H1 (cell line): ENCODE measurements at regions of chr3 and their contacts with region 1.

Region 1: DNA sequence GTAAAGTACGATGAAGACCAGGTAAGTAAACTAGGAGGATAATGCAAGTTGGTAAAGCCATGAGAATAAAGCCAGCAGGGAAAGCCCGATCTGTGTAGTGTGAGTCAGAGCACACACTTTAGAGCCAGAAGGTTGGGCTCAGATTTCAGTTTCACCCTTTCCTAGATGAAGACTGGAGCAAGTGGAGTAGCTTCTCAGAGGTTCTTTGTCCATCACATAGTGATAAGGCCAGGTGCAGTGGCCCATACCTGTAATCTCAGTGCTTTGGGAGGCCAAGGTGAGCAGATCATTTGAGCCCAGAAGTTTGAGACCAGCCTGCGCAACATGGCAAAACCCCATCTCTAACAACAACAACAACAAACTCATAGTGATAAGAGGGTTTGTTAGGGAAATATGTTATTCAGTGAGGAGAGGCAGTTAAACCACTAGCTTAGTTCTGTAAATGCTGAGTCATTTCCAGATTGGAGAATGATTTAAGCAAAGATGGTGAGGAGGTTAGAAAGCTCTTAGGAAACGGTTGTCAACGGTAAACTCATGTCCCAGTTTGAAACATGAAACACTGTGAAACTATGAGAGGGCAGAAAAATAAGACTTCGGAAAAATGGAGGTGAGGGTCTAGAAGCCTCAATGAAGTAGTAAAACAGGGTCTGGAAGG is 39.0 kb downstream of the IL12A start:
- DNase-seq: no peak
- H3K4me3 ChIP-seq: no peak overlapping the region
- H3K27ac ChIP-seq: no peak overlapping the region
- H3K4me1 ChIP-seq: no peaks in the 10 kb centered on the region
- H3K27me3 ChIP-seq: no peaks in the 10 kb centered on the region
- CTCF ChIP-seq: no peak
- EP300 ChIP-seq: no peak
- POLR2A ChIP-seq: no peak
- RAD21 ChIP-seq: no peak

Region 2: DNA sequence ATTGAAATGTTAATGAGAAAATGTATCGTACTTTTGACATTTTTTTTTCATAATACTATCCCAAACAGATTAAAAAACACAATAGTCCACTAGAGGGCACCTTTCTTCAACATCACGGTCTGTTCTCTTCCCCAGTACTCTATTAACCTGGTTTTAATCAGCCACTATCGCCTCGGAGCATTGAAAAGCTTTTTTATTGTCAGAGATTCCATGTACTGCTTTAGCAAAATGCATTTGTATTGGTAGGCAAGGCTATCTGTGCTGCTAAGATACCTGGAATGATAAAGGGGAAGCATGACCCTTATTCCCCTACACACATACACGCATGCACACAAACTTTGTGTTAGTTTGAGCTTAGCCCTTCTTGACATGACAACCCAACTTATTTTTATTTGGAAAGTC is 199.1 kb before region 1 on chr3:
- CTCF ChIA-PET with region 1: no interaction called
- POLR2A ChIA-PET with region 1: no interaction called
- DNase-seq: no peak
- H3K4me3 ChIP-seq: no peak overlapping the region
- H3K27ac ChIP-seq: no peak overlapping the region
- H3K4me1 ChIP-seq: no peaks in the 10 kb centered on the region
- H3K27me3 ChIP-seq: no peaks in the 10 kb centered on the region
- CTCF ChIP-seq: peak in 2 of 3 experiments; percentile 33 to 38; a peak in 2 of 4 replicates
- EP300 ChIP-seq: no peak
- POLR2A ChIP-seq: no peak
- RAD21 ChIP-seq: peak; percentile 56 to 62

Region 3: GRCh38 chr3:160012108-160012507 is 15.6 kb before region 1 on chr3:
- CTCF ChIA-PET with region 1: interaction called, 20 read pairs
- POLR2A ChIA-PET with region 1: no interaction called
- DNase-seq: no peak
- H3K4me3 ChIP-seq: no peak overlapping the region
- H3K27ac ChIP-seq: no peak overlapping the region
- H3K4me1 ChIP-seq: no peaks in the 10 kb centered on the region
- H3K27me3 ChIP-seq: no peaks in the 10 kb centered on the region
- CTCF ChIP-seq: no peak
- EP300 ChIP-seq: no peak
- POLR2A ChIP-seq: no peak
- RAD21 ChIP-seq: no peak

Region 4: GRCh38 chr3:160044121-160044520 is 16.5 kb after region 1 on chr3:
- CTCF ChIA-PET with region 1: interaction called, 25 read pairs
- POLR2A ChIA-PET with region 1: no interaction called
- DNase-seq: no peak
- H3K4me3 ChIP-seq: no peak overlapping the region
- H3K27ac ChIP-seq: no peak overlapping the region
- H3K4me1 ChIP-seq: peaks cover 0 to 4% (median 3%) of the 10 kb centered on the region in 4 experiments; a peak in 2 of 7 replicates
- H3K27me3 ChIP-seq: peaks cover 0 to 4% (median 2%) of the 10 kb centered on the region in 4 experiments; a peak in 5 of 7 replicates
- CTCF ChIP-seq: no peak
- EP300 ChIP-seq: no peak
- POLR2A ChIP-seq: no peak
- RAD21 ChIP-seq: no peak

Region 5: DNA sequence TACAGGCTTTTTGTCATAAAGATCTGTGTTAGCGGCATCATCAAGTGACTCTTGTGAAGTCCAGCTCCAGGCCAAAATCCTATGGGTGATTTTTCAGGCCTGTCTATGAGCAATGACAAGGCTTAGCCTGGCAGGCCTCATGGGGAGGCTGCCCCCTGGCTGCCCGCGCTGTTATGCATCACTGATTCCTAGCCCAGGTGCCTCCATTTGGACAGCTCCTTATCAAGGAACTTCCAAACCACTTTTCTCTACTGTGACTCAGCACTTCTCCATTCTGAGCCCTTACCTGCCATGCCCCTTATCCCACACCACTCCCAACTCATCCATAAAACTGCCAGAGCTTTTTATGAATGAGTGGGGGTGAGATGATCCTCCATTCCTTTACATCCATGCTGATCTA is 106.1 kb after region 1 on chr3:
- CTCF ChIA-PET with region 1: interaction called, 17 read pairs
- POLR2A ChIA-PET with region 1: interaction called, 3 read pairs
- DNase-seq: peak; percentile 19 to 47
- H3K4me3 ChIP-seq: no peak overlapping the region
- H3K27ac ChIP-seq: no peak overlapping the region
- H3K4me1 ChIP-seq: no peaks in the 10 kb centered on the region
- H3K27me3 ChIP-seq: no peaks in the 10 kb centered on the region
- CTCF ChIP-seq: peak; percentile 60 to 68 (median 67)
- EP300 ChIP-seq: no peak
- POLR2A ChIP-seq: no peak
- RAD21 ChIP-seq: peak; percentile 48 to 63

Region 6: DNA sequence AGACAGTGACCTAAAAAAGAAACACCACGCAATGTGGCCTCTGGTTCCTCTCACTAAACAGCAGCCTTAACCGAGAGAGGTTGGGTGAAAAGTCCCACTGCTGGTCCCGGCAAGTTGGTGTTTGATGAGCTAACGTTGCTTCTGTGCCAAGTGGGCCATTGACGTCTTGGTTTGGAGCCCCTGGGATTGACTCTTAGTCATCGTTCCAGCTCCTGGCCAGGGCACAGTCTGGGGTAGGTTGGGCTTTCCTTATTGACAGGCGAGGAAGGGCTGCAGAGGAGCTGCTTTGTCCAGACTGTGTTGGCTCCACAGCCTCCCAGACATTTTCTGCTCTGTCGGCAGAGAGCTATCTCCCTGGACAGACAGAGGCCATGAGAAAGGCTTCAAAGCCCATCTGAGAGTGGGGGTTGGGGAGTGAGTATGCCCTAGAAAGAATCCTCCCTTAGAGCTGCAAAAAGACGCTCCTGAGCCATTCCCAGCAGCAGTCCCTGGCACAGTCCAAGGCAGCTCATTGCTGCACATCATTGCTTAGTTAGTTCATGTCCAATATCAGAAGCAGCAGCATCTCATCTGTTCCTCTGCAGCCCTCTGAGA is 168.9 kb after region 1 on chr3:
- CTCF ChIA-PET with region 1: interaction called, 10 read pairs
- POLR2A ChIA-PET with region 1: no interaction called
- DNase-seq: no peak
- H3K4me3 ChIP-seq: no peak overlapping the region
- H3K27ac ChIP-seq: no peak overlapping the region
- H3K4me1 ChIP-seq: no peaks in the 10 kb centered on the region
- H3K27me3 ChIP-seq: no peaks in the 10 kb centered on the region
- CTCF ChIP-seq: no peak
- EP300 ChIP-seq: no peak
- POLR2A ChIP-seq: no peak
- RAD21 ChIP-seq: no peak

Region 7: GRCh38 chr3:160210799-160211221 is 183.1 kb after region 1 on chr3:
- CTCF ChIA-PET with region 1: interaction called, 21 read pairs
- POLR2A ChIA-PET with region 1: no interaction called
- DNase-seq: no peak
- H3K4me3 ChIP-seq: no peak overlapping the region
- H3K27ac ChIP-seq: no peak overlapping the region
- H3K4me1 ChIP-seq: no peaks in the 10 kb centered on the region
- H3K27me3 ChIP-seq: no peaks in the 10 kb centered on the region
- CTCF ChIP-seq: peak in 2 of 3 experiments; percentile 17 to 19; a peak in 1 of 4 replicates
- EP300 ChIP-seq: no peak
- POLR2A ChIP-seq: no peak
- RAD21 ChIP-seq: peak; percentile 38 to 40